CD4-positive, alpha-beta T cell (primary cell): ENCODE measurements at regions of chr20 and their contacts with region 1.

Region 1: DNA sequence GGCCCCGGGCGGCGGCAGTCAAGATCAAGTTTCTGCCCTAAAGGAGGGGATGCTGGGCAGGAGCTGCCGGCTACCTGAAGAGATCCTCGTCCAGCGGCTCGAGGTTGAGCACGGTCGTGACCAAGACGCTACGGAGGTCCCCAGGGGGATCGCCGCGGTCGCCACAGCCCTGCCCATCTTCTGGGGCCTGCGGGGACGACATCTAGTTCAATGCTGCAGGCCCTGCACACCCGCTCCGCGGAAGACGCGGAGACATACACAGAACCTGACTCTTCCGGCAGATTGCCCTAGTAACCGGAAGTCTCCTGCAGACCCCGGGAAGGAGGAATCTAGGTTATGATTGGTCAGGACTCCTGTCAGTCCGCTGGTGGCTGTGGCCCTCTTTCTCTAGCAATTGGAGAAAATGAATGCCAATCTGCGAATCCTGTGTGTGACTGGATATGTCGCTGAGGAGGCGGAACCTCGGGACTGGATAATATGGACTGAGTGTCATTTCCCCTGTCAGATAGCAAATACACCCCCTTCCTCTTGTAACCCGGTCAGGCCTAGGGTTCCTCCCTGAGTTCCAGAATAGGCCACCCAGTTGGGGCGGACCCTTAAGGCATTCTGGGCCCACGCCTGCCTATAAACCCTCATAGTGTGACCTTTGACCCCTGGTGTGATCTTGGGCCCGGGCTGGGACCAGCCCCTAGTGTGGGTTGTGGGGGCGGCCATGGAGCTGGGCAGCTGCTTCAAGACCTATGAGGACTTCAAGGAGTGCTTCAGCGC is at the starts of genes ACOT8 and ZSWIM3:
- DNase-seq: peak; percentile 80 to 100 (median 90)
- ATAC-seq: peak; percentile 98
- H3K4me3 ChIP-seq: peak within 1 kb of the TSS; percentile 100
- H3K4me3 Mint-ChIP-seq: peak within 1 kb of the TSS; percentile 96
- H3K27ac ChIP-seq: peak within 1 kb of the TSS; percentile 88 to 94
- H3K27ac Mint-ChIP-seq: peak within 1 kb of the TSS; percentile 98
- H3K4me1 ChIP-seq: peaks cover 40% of the 10 kb centered on the region
- H3K4me1 Mint-ChIP-seq: peaks cover 52% of the 10 kb centered on the region
- H3K27me3 ChIP-seq: no peaks in the 10 kb centered on the region
- H3K27me3 Mint-ChIP-seq: no peaks in the 10 kb centered on the region
- CTCF ChIP-seq: no peak
- total RNA-seq, gene ACOT8: 19.1 to 19.9 TPM
- total RNA-seq, gene ZSWIM3: 0.36 to 0.44 TPM

Region 2: DNA sequence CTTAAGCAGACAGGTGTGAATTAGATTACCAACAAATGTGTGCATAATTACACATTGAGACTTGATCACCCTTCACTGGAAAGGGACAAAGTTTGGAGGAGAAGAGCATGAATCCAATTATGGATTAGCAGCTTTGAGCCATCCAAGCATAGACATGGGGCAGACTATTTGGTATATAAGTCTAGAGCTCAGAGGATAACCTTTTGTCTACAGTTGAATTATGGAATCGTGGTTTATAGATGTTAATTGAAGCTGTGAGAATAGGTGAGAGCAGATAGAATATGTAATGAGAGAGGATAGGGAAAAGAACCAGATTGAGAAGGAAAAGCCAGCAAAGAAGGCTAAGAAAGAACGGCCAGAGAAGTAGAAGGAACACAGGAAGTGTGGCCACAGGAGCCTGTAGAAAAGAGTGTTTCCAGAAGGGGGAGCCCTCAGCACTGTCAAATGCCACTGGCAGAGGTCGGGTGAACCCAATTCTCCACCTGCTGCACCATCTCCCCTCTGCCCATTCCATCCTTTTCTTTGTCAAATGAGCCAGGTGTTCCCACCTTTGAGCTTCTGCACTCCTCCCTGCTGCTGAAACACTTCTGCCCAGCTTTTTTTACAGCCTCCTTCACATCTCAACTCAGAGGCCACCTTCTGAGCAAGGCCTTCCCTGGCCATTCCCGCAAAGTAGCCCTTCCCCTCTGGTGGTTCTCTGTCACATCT is 58.2 kb before region 1 on chr20:
- CTCF ChIA-PET with region 1: no interaction called
- POLR2A ChIA-PET with region 1: no interaction called
- intact Hi-C with region 1: loop called in 1 of 2 experiments (anchors 5 kb)
- DNase-seq: peak; percentile 43 to 79 (median 57)
- ATAC-seq: peak; percentile 99
- H3K4me3 ChIP-seq: no peak overlapping the region
- H3K4me3 Mint-ChIP-seq: no peak overlapping the region
- H3K27ac ChIP-seq: peak overlapping the region in 1 of 2 donors; percentile 1
- H3K27ac Mint-ChIP-seq: no peak overlapping the region
- H3K4me1 ChIP-seq: peaks cover 5% of the 10 kb centered on the region
- H3K4me1 Mint-ChIP-seq: peaks cover 15% of the 10 kb centered on the region
- H3K27me3 ChIP-seq: no peaks in the 10 kb centered on the region
- H3K27me3 Mint-ChIP-seq: no peaks in the 10 kb centered on the region
- CTCF ChIP-seq: peak; percentile 75

Region 3: DNA sequence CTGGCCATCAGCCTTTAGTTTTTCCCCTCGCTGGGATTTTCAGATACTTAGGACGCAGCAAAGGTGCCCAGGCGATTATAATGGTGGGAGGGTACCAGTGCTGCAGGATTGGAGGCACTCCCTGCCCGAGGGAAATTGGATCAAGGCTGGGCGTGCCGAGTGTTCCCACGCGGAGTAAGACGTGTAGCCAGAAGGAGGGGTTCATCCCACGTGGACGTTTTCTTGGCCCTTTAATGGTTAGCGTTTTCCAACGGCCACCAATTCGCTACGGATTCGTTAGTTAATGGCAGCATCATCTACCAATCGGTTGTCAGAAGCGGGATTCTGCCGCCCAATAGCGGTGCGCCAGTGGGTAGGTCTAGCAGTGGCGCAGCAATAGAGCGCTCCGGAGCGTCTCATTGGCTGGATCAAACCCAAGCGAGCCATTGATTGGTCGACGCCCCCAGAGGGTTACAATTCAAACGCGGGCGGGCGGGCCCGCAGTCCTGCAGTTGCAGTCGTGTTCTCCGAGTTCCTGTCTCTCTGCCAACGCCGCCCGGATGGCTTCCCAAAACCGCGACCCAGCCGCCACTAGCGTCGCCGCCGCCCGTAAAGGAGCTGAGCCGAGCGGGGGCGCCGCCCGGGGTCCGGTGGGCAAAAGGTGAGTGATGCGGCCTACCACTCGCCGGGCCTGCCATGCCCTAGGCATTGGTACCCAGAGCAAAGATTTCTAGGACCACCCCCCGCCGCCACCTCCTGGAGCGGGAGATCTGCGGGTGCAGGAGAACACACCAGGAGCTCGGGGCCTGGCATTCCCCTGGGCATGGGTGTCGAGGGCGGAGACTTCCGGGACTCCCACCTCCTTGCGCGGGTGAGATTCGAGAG is 44.9 kb before region 1 on chr20 and contains the start of gene UBE2C:
- CTCF ChIA-PET with region 1: interaction called, 3 read pairs
- POLR2A ChIA-PET with region 1: interaction called, 3 read pairs
- intact Hi-C with region 1: loop called (anchors 2 to 5 kb)
- DNase-seq: peak; percentile 85 to 98 (median 90)
- ATAC-seq: peak; percentile 100
- H3K4me3 ChIP-seq: peak within 1 kb of the TSS; percentile 72
- H3K4me3 Mint-ChIP-seq: peak within 1 kb of the TSS; percentile 82
- H3K27ac ChIP-seq: no peak within 1 kb of the TSS
- H3K27ac Mint-ChIP-seq: peak within 1 kb of the TSS; percentile 58
- H3K4me1 ChIP-seq: peaks cover 16% of the 10 kb centered on the region
- H3K4me1 Mint-ChIP-seq: peaks cover 15% of the 10 kb centered on the region
- H3K27me3 ChIP-seq: no peaks in the 10 kb centered on the region
- H3K27me3 Mint-ChIP-seq: no peaks in the 10 kb centered on the region
- CTCF ChIP-seq: no peak
- total RNA-seq, gene UBE2C: 0.52 to 0.64 TPM

Region 4: DNA sequence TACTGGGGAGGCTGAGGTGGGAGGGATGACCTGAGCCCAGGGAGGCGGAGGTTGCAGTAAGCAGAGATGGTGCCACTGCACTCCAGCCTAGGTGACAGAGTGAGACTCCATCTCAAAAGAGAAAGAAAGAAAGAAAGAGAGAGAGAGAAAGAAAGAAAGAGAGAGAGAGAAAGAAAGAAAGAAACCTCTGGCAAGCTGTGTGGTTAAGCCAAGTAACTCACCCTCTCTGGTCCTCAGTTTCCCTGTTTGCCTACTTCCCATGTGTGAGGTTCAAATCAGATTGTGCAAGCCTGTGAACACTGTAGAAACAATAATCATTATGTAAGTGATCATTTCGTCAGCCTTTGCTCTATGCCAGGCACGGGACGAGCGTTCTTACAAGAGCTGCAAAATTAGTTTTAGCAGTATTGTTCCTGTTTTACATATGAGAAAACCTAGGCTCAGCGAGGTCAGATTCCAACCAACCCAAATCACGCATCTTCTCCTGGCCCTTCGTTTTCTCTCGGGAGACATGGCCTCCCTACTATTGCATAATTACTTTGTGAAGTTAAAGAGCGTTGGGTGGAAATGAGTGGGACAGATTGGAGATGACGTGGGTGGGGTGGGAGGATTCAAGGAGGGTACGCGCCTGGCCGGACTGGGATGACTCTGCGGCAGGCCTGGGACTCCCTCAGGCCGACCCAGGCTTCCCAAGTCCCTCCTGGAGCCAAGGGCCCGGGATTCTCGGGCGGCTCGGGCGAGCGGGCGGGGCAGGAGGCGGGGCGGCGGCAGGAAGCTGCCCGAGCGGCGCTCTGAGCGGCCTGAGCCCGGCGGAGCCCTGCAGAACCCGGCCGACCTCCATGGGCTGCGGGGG is 24.0 kb before region 1 on chr20 and contains the start of gene SNX21:
- CTCF ChIA-PET with region 1: no interaction called
- POLR2A ChIA-PET with region 1: interaction called, 11 read pairs
- intact Hi-C with region 1: no loop called
- DNase-seq: peak in 8 of 14 experiments; percentile 4 to 54 (median 33)
- ATAC-seq: peak; percentile 65
- H3K4me3 ChIP-seq: peak within 1 kb of the TSS; percentile 67
- H3K4me3 Mint-ChIP-seq: peak within 1 kb of the TSS; percentile 95
- H3K27ac ChIP-seq: no peak within 1 kb of the TSS
- H3K27ac Mint-ChIP-seq: peak within 1 kb of the TSS; percentile 60
- H3K4me1 ChIP-seq: peaks cover 25% of the 10 kb centered on the region
- H3K4me1 Mint-ChIP-seq: peaks cover 16% of the 10 kb centered on the region
- H3K27me3 ChIP-seq: no peaks in the 10 kb centered on the region
- H3K27me3 Mint-ChIP-seq: no peaks in the 10 kb centered on the region
- CTCF ChIP-seq: no peak
- total RNA-seq, gene SNX21: 0.36 to 0.89 TPM

Region 5: DNA sequence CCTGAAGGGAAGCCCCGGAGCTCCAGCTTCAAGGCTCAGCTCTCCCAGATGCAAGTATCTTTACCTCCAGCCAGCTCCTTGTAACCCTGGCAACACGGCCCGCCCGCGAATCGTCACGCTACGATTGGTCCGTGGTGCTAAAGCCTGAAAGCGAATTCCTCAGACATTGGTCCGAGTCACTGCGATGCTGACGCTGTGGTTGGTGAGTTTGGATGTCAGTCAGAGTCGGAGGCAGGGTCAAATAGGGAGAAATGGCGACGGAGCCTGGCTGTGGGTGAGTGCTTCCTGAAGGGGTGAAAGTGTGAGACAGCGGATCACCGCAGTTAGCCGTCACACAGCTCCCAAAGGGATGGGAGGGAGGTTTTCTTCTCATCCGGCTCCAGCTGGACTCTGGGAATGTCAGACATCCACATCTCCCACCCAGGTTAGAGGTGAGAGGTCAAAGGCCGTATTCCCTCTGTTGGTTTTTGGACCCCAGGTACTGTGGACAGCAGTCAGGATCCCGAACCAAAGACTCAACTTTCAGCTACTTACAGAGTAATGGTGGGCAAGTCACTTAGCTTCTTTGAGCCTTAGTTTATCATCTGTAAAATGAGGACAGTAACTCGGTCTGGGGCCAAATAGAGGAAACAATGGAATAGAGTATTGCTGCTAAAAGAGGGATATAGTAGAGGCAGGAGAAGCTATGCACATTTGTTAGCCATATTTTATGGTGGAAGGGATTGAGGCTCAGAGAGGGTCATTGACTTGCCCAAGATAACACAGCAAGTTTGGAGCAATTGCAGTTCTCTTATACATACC is 23.9 kb after region 1 on chr20 and contains the start of gene ZSWIM1:
- CTCF ChIA-PET with region 1: no interaction called
- POLR2A ChIA-PET with region 1: interaction called, 16 read pairs
- intact Hi-C with region 1: loop called (anchors 2 kb)
- DNase-seq: peak; percentile 96 to 100 (median 99)
- ATAC-seq: peak; percentile 98
- H3K4me3 ChIP-seq: peak within 1 kb of the TSS; percentile 78
- H3K4me3 Mint-ChIP-seq: peak within 1 kb of the TSS; percentile 87
- H3K27ac ChIP-seq: peak within 1 kb of the TSS; percentile 79 to 82
- H3K27ac Mint-ChIP-seq: peak within 1 kb of the TSS; percentile 86
- H3K4me1 ChIP-seq: peaks cover 51% of the 10 kb centered on the region
- H3K4me1 Mint-ChIP-seq: peaks cover 42% of the 10 kb centered on the region
- H3K27me3 ChIP-seq: no peaks in the 10 kb centered on the region
- H3K27me3 Mint-ChIP-seq: no peaks in the 10 kb centered on the region
- CTCF ChIP-seq: no peak
- total RNA-seq, gene ZSWIM1: 9.3 to 10.7 TPM

Region 6: GRCh38 chr20:45890985-45891983 is 34.0 kb after region 1 on chr20 and contains the starts of genes CTSA and NEURL2:
- CTCF ChIA-PET with region 1: no interaction called
- POLR2A ChIA-PET with region 1: interaction called, 20 read pairs
- intact Hi-C with region 1: loop called (anchors 2 to 5 kb)
- DNase-seq: peak; percentile 64 to 92 (median 76)
- ATAC-seq: peak; percentile 79
- H3K4me3 ChIP-seq: peak within 1 kb of the TSS; percentile 93
- H3K4me3 Mint-ChIP-seq: peak within 1 kb of the TSS; percentile 96
- H3K27ac ChIP-seq: peak within 1 kb of the TSS; percentile 50 to 65
- H3K27ac Mint-ChIP-seq: peak within 1 kb of the TSS; percentile 84
- H3K4me1 ChIP-seq: peaks cover 48% of the 10 kb centered on the region
- H3K4me1 Mint-ChIP-seq: peaks cover 51% of the 10 kb centered on the region
- H3K27me3 ChIP-seq: no peaks in the 10 kb centered on the region
- H3K27me3 Mint-ChIP-seq: no peaks in the 10 kb centered on the region
- CTCF ChIP-seq: no peak
- total RNA-seq, gene CTSA: 40.3 to 42.6 TPM
- total RNA-seq, gene NEURL2: 1.5 to 2.5 TPM